Stomach (tissue), 19 donors: ENCODE measurements at regions of chr14 and their contacts with region 1.

Region 1: GRCh38 chr14:88179716-88180115 is 143.4 kb downstream of the KCNK10 start:
- DNase-seq: no peak
- H3K4me3 ChIP-seq: no peak overlapping the region
- H3K27ac ChIP-seq: no peak overlapping the region
- H3K4me1 ChIP-seq: no peaks in the 10 kb centered on the region
- H3K27me3 ChIP-seq: no peaks in the 10 kb centered on the region
- CTCF ChIP-seq: no peak
- EP300 ChIP-seq: no peak
- POLR2A ChIP-seq: no peak

Region 2: GRCh38 chr14:88013750-88014349 is 165.9 kb before region 1 on chr14:
- intact Hi-C with region 1: loop called (anchors 10 kb)
- DNase-seq: peak; percentile 74 to 89
- H3K4me3 ChIP-seq: no peak overlapping the region
- H3K27ac ChIP-seq: no peak overlapping the region
- H3K4me1 ChIP-seq: peaks cover 0 to 10% (median 4%) of the 10 kb centered on the region in 4 donors
- H3K27me3 ChIP-seq: no peaks in the 10 kb centered on the region
- CTCF ChIP-seq: peak in 5 of 7 experiments; percentile 78 to 93 (median 90)
- EP300 ChIP-seq: no peak
- POLR2A ChIP-seq: no peak

Region 3: GRCh38 chr14:88270776-88271175 is 91.1 kb after region 1 on chr14:
- intact Hi-C with region 1: no loop called
- DNase-seq: peak; percentile 78 to 88
- H3K4me3 ChIP-seq: no peak overlapping the region
- H3K27ac ChIP-seq: peak overlapping the region in 2 of 5 donors; percentile 41 to 50
- H3K4me1 ChIP-seq: peaks cover 0 to 15% (median 5%) of the 10 kb centered on the region in 4 donors
- H3K27me3 ChIP-seq: no peaks in the 10 kb centered on the region
- CTCF ChIP-seq: no peak
- EP300 ChIP-seq: no peak
- POLR2A ChIP-seq: no peak